ENCODE measurements at regions of chr11 and their contacts with region 1.

Region 1: DNA sequence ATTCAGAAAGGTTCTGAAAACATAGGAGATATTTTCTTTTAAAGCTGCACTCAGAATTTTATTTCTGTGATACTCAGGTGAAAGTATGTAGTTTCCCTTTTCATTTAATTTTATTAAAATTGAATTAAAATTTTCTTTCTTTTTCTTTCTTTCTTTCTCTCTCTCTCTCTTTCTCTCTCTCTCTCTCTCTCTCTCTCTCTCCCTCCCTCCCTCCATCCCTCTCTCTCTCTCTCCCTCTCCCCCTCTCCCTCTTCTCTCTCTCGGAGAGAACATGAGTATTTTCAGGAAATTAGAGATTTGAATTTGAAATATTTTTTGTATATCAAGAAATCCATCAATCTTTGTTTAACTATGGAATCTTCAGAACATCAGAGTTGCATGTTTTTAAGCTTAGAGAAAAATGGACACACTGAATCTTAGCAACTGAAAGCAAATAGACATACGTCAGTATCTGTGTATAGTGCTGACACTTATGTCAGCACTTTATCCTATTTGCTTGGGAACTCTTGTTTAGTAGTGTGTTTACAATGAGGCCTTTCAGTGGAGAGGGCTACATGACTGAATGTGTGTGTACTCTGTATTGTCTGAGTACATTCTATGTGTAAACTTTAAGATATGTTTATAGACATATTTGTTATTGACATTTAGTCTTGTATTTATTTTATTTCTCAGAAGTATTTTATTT is 44.5 kb downstream of the PDE3B start:
- DNase-seq: peak in 1 of 9 experiments; percentile 41
- ATAC-seq: peak; percentile 51
- H3K4me3 ChIP-seq: no peak overlapping the region
- H3K4me3 Mint-ChIP-seq: no peak overlapping the region
- H3K27ac ChIP-seq: no peak overlapping the region
- H3K27ac Mint-ChIP-seq: peak overlapping the region; percentile 33
- H3K4me1 ChIP-seq: peaks cover 23% of the 10 kb centered on the region
- H3K4me1 Mint-ChIP-seq: peaks cover 59% of the 10 kb centered on the region
- H3K27me3 ChIP-seq: no peaks in the 10 kb centered on the region
- H3K27me3 Mint-ChIP-seq: no peaks in the 10 kb centered on the region
- CTCF ChIP-seq: no peak

Region 2: GRCh38 chr11:13868710-13869397 is 819.2 kb before region 1 on chr11:
- CTCF ChIA-PET with region 1: no interaction called
- POLR2A ChIA-PET with region 1: no interaction called
- intact Hi-C with region 1: loop called in 1 of 2 experiments (anchors 2 kb)
- DNase-seq: peak in 5 of 9 experiments; percentile 12 to 90 (median 57)
- ATAC-seq: peak; percentile 88
- H3K4me3 ChIP-seq: no peak overlapping the region
- H3K4me3 Mint-ChIP-seq: peak overlapping the region; percentile 1
- H3K27ac ChIP-seq: peak overlapping the region; percentile 54 to 82
- H3K27ac Mint-ChIP-seq: peak overlapping the region; percentile 93
- H3K4me1 ChIP-seq: peaks cover 21% of the 10 kb centered on the region
- H3K4me1 Mint-ChIP-seq: peaks cover 33% of the 10 kb centered on the region
- H3K27me3 ChIP-seq: no peaks in the 10 kb centered on the region
- H3K27me3 Mint-ChIP-seq: no peaks in the 10 kb centered on the region
- CTCF ChIP-seq: no peak

Region 3: DNA sequence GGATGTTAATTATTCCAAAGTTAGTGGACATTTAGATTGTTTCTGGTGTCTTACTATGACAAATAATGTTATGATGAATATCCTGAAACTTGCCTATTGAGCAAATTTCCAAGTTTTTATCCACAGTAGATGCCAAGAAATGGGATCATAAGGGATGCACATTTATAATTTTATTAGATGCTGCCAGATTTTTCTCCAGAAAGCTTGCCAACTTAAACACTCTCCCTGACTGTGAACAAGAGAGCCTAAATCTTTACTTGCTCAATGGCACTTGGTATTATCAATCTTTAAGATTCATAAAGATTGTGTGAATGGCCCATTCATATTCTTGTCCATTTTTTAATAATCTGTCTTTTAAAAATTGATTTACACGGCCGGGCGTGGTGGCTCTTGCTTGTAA is 643.2 kb before region 1 on chr11:
- CTCF ChIA-PET with region 1: no interaction called
- POLR2A ChIA-PET with region 1: no interaction called
- intact Hi-C with region 1: no loop called
- DNase-seq: no peak
- ATAC-seq: no peak
- H3K4me3 ChIP-seq: no peak overlapping the region
- H3K4me3 Mint-ChIP-seq: no peak overlapping the region
- H3K27ac ChIP-seq: no peak overlapping the region
- H3K27ac Mint-ChIP-seq: no peak overlapping the region
- H3K4me1 ChIP-seq: no peaks in the 10 kb centered on the region
- H3K4me1 Mint-ChIP-seq: no peaks in the 10 kb centered on the region
- H3K27me3 ChIP-seq: no peaks in the 10 kb centered on the region
- H3K27me3 Mint-ChIP-seq: no peaks in the 10 kb centered on the region
- CTCF ChIP-seq: no peak

Region 4: GRCh38 chr11:14249121-14249963 is 438.7 kb before region 1 on chr11:
- CTCF ChIA-PET with region 1: no interaction called
- POLR2A ChIA-PET with region 1: no interaction called
- intact Hi-C with region 1: no loop called
- DNase-seq: peak; percentile 37 to 85 (median 73)
- ATAC-seq: peak; percentile 61
- H3K4me3 ChIP-seq: no peak overlapping the region
- H3K4me3 Mint-ChIP-seq: peak overlapping the region; percentile 61
- H3K27ac ChIP-seq: no peak overlapping the region
- H3K27ac Mint-ChIP-seq: no peak overlapping the region
- H3K4me1 ChIP-seq: peaks cover 16% of the 10 kb centered on the region
- H3K4me1 Mint-ChIP-seq: peaks cover 22% of the 10 kb centered on the region
- H3K27me3 ChIP-seq: no peaks in the 10 kb centered on the region
- H3K27me3 Mint-ChIP-seq: no peaks in the 10 kb centered on the region
- CTCF ChIP-seq: peak; percentile 98

Region 5: GRCh38 chr11:14578541-14578956 is 109.5 kb before region 1 on chr11:
- CTCF ChIA-PET with region 1: no interaction called
- POLR2A ChIA-PET with region 1: no interaction called
- intact Hi-C with region 1: no loop called
- DNase-seq: peak; percentile 32 to 98 (median 74)
- ATAC-seq: peak; percentile 90
- H3K4me3 ChIP-seq: no peak overlapping the region
- H3K4me3 Mint-ChIP-seq: peak overlapping the region; percentile 56
- H3K27ac ChIP-seq: peak overlapping the region; percentile 58 to 85
- H3K27ac Mint-ChIP-seq: peak overlapping the region; percentile 96
- H3K4me1 ChIP-seq: peaks cover 42% of the 10 kb centered on the region
- H3K4me1 Mint-ChIP-seq: peaks cover 64% of the 10 kb centered on the region
- H3K27me3 ChIP-seq: no peaks in the 10 kb centered on the region
- H3K27me3 Mint-ChIP-seq: no peaks in the 10 kb centered on the region
- CTCF ChIP-seq: no peak

Region 6: GRCh38 chr11:14698771-14699170 is 10.7 kb after region 1 on chr11:
- CTCF ChIA-PET with region 1: no interaction called
- POLR2A ChIA-PET with region 1: no interaction called
- intact Hi-C with region 1: loop called in 1 of 2 experiments (anchors 2 kb)
- DNase-seq: peak in 1 of 9 experiments; percentile 27
- ATAC-seq: peak; percentile 56
- H3K4me3 ChIP-seq: no peak overlapping the region
- H3K4me3 Mint-ChIP-seq: peak overlapping the region; percentile 42
- H3K27ac ChIP-seq: no peak overlapping the region
- H3K27ac Mint-ChIP-seq: peak overlapping the region; percentile 66
- H3K4me1 ChIP-seq: peaks cover 49% of the 10 kb centered on the region
- H3K4me1 Mint-ChIP-seq: peaks cover 60% of the 10 kb centered on the region
- H3K27me3 ChIP-seq: no peaks in the 10 kb centered on the region
- H3K27me3 Mint-ChIP-seq: no peaks in the 10 kb centered on the region
- CTCF ChIP-seq: no peak

Measured in CD8-positive, alpha-beta T cell (primary cell).